ENCODE measurements at regions of chr7 and their contacts with region 1.

Region 1: GRCh38 chr7:74401137-74401859 is 52.4 kb upstream of the GTF2IRD1 start:
- DNase-seq: peak; percentile 82
- CTCF ChIP-seq: peak; percentile 90

Region 2: DNA sequence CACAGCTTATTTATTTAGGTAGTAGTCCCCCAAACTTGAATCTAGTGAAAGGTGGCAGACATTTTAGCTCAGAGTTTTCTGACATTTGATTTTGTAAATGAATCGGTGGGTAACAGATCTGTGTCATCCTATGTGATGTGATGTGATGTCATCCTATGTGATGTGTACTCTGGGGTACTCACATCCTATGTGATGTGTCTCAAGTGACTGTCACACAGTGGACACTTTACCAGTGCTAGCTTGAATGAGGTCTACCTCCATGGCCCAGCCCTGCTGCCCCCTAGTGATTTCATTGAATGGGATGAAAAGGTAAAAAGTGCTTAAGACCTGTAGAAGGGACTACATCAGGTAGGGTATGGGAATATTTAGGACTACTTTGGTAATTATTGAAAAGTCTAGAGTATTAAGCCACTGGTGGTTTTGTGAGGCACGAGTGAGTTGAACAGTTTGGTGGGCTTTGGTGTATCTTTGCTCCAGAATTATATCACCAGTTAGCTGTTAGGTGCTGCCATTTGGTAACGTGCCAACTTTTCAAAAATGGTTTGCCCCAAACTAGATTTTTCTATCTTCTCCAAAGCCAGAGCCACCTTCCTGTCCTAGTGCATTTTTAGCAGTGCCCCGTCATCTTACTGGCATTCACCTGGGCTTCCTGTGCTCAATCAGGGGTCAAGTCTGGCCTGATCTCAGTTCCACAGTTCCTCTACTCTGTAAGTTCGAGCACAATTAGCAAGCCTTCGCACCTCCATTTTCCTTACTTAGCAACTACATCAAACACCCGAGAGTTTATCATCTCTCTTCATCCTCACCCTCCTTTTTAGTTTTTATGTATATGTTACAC is 217.5 kb before region 1 on chr7:
- CTCF ChIA-PET with region 1: interaction called, 12 read pairs
- POLR2A ChIA-PET with region 1: no interaction called
- DNase-seq: no peak
- CTCF ChIP-seq: peak; percentile 42

Region 3: GRCh38 chr7:74212656-74213055 is 188.6 kb before region 1 on chr7:
- CTCF ChIA-PET with region 1: interaction called, 197 read pairs
- POLR2A ChIA-PET with region 1: no interaction called
- DNase-seq: no peak
- CTCF ChIP-seq: no peak

Region 4: DNA sequence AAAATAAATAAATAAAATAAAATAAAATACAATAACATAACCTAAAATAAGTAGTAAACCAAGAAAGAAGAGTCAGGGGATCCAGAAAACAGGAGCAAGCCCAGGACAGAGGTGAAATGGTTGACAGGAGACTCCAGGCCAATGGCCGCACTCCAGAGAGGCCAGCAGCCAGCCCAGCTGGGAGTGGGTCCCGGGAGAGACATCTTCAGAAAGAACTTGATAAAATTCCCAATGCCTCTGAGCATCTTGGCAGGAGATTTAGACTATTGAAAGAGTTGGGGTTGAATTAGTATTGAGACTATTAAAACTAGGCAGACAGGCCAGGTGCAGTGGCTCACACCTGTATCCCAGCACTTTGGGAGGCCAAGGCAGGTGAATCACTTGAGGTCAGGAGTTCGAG is 49.5 kb before region 1 on chr7:
- CTCF ChIA-PET with region 1: interaction called, 11 read pairs
- POLR2A ChIA-PET with region 1: no interaction called
- DNase-seq: no peak
- CTCF ChIP-seq: no peak

Region 5: GRCh38 chr7:74388880-74389415 is 12.3 kb before region 1 on chr7:
- CTCF ChIA-PET with region 1: interaction called, 65 read pairs
- POLR2A ChIA-PET with region 1: no interaction called
- DNase-seq: no peak
- CTCF ChIP-seq: no peak

Region 6: GRCh38 chr7:74453322-74454011 is 52.2 kb after region 1 on chr7 and contains the start of gene GTF2IRD1:
- CTCF ChIA-PET with region 1: no interaction called
- POLR2A ChIA-PET with region 1: no interaction called
- DNase-seq: peak; percentile 77
- CTCF ChIP-seq: no peak